HEK293 (cell line): ENCODE measurements at regions of chrX and their contacts with region 1.

Region 1: DNA sequence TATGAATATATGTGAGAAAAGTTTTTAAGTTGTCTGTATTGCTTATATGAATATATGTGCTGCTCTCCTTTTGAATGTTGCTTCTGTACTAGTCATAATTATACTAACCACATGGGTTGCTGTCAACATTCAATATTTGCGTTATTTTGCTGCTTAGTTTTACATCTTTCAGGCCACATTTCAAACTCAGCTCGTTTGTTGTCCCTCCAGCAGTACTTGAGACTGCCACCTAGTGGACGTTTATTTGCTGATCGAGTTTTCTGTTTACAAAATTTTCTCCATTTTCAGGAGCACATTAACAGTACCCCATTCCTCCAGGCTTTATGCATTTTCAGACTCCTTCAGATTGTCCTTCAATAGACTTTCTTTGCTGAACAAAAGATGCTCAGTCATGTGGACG is 75.8 kb downstream of the NUDT11 start:
- H3K4me3 ChIP-seq: no peak overlapping the region
- H3K27ac ChIP-seq: no peak overlapping the region
- H3K4me1 ChIP-seq: no peaks in the 10 kb centered on the region
- CTCF ChIP-seq: 0 out of 2 replicates have a peak, but pooled peaks have one; percentile 12

Region 2: DNA sequence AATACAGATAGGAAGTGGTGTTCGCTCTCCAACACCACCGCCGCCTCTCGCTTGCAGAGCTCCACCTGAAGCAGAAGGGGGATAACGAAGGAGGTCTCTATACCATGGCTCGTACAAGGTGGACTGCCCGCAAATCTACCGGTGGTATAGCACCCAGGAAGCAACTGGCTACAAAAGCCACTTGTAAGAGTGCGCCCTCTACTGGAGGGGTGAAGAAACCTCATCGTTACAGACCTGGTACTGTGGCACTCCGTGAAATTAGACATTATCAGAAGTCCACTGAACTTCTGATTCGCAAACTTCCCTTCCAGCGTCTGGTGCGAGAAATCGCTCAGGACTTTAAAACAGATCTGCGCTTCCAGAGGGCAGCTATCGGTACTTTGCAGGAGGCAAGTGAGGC is 515.3 kb before region 1 on chrX:
- CTCF ChIA-PET with region 1: no interaction called
- POLR2A ChIA-PET with region 1: no interaction called
- H3K4me3 ChIP-seq: no peak overlapping the region
- H3K27ac ChIP-seq: no peak overlapping the region
- H3K4me1 ChIP-seq: no peaks in the 10 kb centered on the region
- CTCF ChIP-seq: no peak

Region 3: GRCh38 chrX:51215259-51215658 is 205.4 kb before region 1 on chrX:
- CTCF ChIA-PET with region 1: no interaction called
- POLR2A ChIA-PET with region 1: no interaction called
- H3K4me3 ChIP-seq: no peak overlapping the region
- H3K27ac ChIP-seq: no peak overlapping the region
- H3K4me1 ChIP-seq: no peaks in the 10 kb centered on the region
- CTCF ChIP-seq: no peak

Region 4: GRCh38 chrX:51336584-51336983 is 84.0 kb before region 1 on chrX:
- CTCF ChIA-PET with region 1: interaction called, 37 read pairs
- POLR2A ChIA-PET with region 1: no interaction called
- H3K4me3 ChIP-seq: no peak overlapping the region
- H3K27ac ChIP-seq: no peak overlapping the region
- H3K4me1 ChIP-seq: no peaks in the 10 kb centered on the region
- CTCF ChIP-seq: no peak